ENCODE measurements at regions of chr14 and their contacts with region 1.

Region 1: GRCh38 chr14:22589096-22589839 is at the start of gene DAD1:
- DNase-seq: peak; percentile 100
- ATAC-seq: peak; percentile 98
- H3K4me3 ChIP-seq: peak within 1 kb of the TSS; percentile 85 to 92 (median 86)
- H3K27ac ChIP-seq: peak within 1 kb of the TSS; percentile 80
- H3K4me1 ChIP-seq: peaks cover 52% of the 10 kb centered on the region
- H3K27me3 ChIP-seq: peaks cover 0 to 23% of the 10 kb centered on the region in 2 experiments; a peak in 2 of 5 replicates
- CTCF ChIP-seq: no peak
- EP300 ChIP-seq: 0 out of 4 replicates have a peak, but pooled peaks of 1 of the 2 experiments have one; percentile 19
- POLR2A ChIP-seq: peak in 1 of 2 experiments; percentile 97; a peak in 2 of 4 replicates
- RAD21 ChIP-seq: peak; percentile 67; the same call in 1 of the 2 replicates
- total RNA-seq, gene DAD1: 385 and 558 TPM in 2 replicates

Region 2: DNA sequence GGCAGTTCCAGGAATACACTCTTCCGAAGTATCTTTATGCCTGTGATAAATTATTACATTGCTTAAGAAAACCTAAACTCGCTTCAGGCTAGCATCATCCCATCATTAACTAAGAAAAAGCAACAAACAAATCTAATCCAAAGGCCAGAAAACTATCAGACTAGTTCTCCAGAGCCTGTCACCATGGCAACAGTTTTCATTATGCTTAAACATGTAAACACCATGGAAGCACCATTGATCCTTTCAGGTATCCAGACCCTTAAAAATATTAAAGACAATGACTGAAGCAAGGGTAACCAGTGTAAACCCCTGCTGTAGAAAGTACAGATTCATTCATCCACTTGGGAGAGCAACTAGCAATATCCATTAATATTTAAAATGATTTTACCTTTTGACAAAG is 10.0 kb before region 1 on chr14:
- CTCF ChIA-PET with region 1: no interaction called
- POLR2A ChIA-PET with region 1: interaction called, 18 read pairs
- in situ Hi-C with region 1: no loop called
- intact Hi-C with region 1: no loop called
- DNase-seq: no peak
- ATAC-seq: no peak
- H3K4me3 ChIP-seq: no peak overlapping the region
- H3K27ac ChIP-seq: no peak overlapping the region
- H3K4me1 ChIP-seq: peaks cover 11% of the 10 kb centered on the region
- H3K27me3 ChIP-seq: no peaks in the 10 kb centered on the region
- CTCF ChIP-seq: no peak
- EP300 ChIP-seq: no peak
- POLR2A ChIP-seq: no peak
- RAD21 ChIP-seq: no peak

Region 3: DNA sequence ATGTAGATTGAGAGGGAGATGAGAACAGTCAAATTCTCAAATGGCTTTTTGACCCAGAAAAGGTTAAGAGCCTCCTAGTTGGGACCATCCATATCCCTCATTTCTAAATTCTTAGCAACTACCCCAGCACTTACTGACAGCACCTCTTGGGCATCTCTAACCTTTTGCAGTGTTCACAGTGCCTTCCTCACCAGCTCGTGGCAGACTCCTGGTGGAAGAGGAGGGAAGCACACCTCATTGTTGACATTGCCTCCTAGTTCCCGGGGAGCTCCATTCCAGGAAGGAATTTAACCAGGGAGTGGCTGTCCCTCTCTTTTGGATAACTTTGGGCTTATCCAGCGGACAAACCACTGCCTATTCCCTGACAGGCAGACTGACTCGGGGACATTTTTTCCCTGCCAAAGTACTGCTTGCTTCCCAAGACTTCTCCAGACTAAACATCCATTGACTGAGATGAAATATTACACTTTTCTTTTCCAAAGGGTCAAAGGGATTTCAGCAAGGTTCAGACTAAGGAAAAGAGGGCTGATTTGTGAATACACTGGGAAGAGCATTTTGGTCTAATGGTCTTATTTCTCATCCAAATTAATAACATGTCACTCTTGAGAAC is 63.8 kb after region 1 on chr14:
- CTCF ChIA-PET with region 1: no interaction called
- POLR2A ChIA-PET with region 1: interaction called, 10 read pairs
- in situ Hi-C with region 1: no loop called
- intact Hi-C with region 1: loop called (anchors 1 kb)
- DNase-seq: peak; percentile 86
- ATAC-seq: peak; percentile 98
- H3K4me3 ChIP-seq: no peak overlapping the region
- H3K27ac ChIP-seq: no peak overlapping the region
- H3K4me1 ChIP-seq: 0 out of 2 replicates have a peak, but pooled peaks cover 5% of the 10 kb centered on the region
- H3K27me3 ChIP-seq: peaks cover 3 to 36% of the 10 kb centered on the region in 2 experiments; a peak in 4 of 5 replicates
- CTCF ChIP-seq: peak; percentile 99
- EP300 ChIP-seq: no peak; a peak in 1 of 4 replicates
- POLR2A ChIP-seq: no peak
- RAD21 ChIP-seq: peak; percentile 94

Region 4: DNA sequence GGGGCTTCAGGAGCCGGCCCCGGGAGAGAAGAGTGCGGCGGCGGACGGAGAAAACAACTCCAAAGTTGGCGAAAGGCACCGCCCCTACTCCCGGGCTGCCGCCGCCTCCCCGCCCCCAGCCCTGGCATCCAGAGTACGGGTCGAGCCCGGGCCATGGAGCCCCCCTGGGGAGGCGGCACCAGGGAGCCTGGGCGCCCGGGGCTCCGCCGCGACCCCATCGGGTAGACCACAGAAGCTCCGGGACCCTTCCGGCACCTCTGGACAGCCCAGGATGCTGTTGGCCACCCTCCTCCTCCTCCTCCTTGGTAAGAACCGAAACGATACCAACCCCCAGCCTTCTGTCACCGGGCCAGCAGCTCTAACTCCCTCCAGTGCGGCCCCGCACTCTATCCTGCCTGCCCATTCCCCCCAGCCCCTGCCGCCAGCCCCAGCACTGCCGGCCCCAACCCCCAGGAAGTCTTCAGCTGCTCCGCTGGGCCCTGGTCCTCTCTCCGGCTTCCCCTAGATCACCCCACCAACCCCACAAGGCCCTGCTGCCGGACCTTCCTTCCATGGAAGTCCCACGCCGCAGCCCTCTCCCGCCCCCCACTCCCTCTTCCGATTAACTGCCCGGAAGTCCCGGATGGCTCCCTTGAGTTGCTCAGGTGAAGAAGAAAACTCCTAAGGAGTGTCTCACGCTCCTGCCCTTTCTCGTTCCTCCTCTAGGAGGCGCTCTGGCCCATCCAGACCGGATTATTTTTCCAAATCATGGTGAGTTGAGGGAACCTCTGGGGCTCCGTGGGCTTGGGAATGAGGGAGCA is 283.0 kb after region 1 on chr14:
- CTCF ChIA-PET with region 1: no interaction called
- POLR2A ChIA-PET with region 1: interaction called, 19 read pairs
- in situ Hi-C with region 1: no loop called
- intact Hi-C with region 1: no loop called
- DNase-seq: peak; percentile 84
- ATAC-seq: peak; percentile 62
- H3K4me3 ChIP-seq: peak overlapping the region; percentile 66 to 93 (median 82)
- H3K27ac ChIP-seq: peak overlapping the region; percentile 85
- H3K4me1 ChIP-seq: peaks cover 35% of the 10 kb centered on the region
- H3K27me3 ChIP-seq: no peaks in the 10 kb centered on the region; a peak in 1 of 5 replicates
- CTCF ChIP-seq: peak; percentile 99
- EP300 ChIP-seq: peak in 1 of 2 experiments; percentile 54; a peak in 2 of 4 replicates
- POLR2A ChIP-seq: no peak
- RAD21 ChIP-seq: peak; percentile 68